Heart right ventricle (tissue), 16 donors: ENCODE measurements at regions of chr14 and their contacts with region 1.

Region 1: DNA sequence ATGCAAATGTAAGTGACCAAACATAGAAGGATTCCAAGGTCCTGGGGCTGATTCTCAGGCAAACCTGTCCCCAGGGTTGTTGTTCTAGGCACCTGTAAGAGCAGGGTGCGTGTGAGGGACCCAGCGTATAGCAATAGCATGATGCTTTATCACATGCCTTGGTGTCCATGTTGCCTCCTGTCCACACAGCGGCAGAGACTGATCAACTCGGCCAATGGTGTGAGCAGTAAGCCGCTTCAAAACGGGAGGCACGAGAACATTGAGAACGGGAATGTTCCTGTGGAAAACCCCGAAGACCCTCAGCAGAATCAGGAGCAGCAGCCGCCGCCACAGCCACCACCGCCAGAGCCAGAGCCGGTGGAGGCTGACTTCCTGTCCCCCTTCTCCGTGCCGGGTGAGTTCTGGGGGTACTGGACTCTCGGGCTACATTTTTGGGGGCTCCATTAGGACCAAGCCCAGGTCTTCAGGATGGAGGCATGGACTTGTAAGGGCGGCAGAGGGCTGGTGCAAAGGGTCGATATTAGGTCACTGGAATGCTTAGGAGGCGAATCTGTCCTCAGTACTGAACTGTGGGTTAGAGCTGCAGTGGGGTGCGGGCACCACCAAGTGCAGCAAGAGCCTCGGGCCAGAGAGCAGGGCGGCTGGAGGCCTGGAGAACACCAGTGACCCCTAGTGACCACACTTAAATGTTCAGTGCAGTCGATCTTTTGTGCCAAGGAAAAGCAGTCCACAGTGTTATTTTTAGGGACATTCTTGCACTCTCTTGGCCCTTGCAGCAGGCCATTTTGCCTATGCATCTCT is 57.2 kb upstream of the RIN3 start:
- DNase-seq: peak; percentile 59 to 70
- ATAC-seq: peak; percentile 40 to 78 (median 60)
- H3K4me3 ChIP-seq: no peak overlapping the region
- H3K27ac ChIP-seq: peak overlapping the region in 3 of 10 donors; percentile 4 to 25 (median 22)
- H3K4me1 ChIP-seq: peaks cover 10 to 51% (median 31%) of the 10 kb centered on the region in 9 donors
- H3K27me3 ChIP-seq: no peaks in the 10 kb centered on the region
- CTCF ChIP-seq: peak; percentile 67 to 85 (median 82)

Region 2: GRCh38 chr14:92121670-92122350 is 334.6 kb before region 1 on chr14 and contains the starts of genes CPSF2 and NDUFB1:
- intact Hi-C with region 1: loop called in 1 of 10 experiments (anchors 5 kb)
- DNase-seq: peak; percentile 87 to 92
- ATAC-seq: peak; percentile 91 to 97 (median 94)
- H3K4me3 ChIP-seq: peak within 1 kb of the TSS; percentile 64 to 98 (median 84)
- H3K27ac ChIP-seq: peak within 1 kb of the TSS; percentile 83 to 100 (median 96)
- H3K4me1 ChIP-seq: peaks cover 4 to 66% (median 42%) of the 10 kb centered on the region in 9 donors
- H3K27me3 ChIP-seq: no peaks in the 10 kb centered on the region
- CTCF ChIP-seq: peak in 1 of 9 donors; percentile 9
- total RNA-seq, gene CPSF2: 35.0 to 50.3 (median 43.2) TPM
- total RNA-seq, gene NDUFB1: 340 to 642 (median 481) TPM

Region 3: GRCh38 chr14:92144708-92145107 is 311.7 kb before region 1 on chr14:
- intact Hi-C with region 1: loop called in 7 of 10 experiments (anchors 5 to 10 kb)
- DNase-seq: no peak
- ATAC-seq: no peak
- H3K4me3 ChIP-seq: no peak overlapping the region
- H3K27ac ChIP-seq: no peak overlapping the region
- H3K4me1 ChIP-seq: no peaks in the 10 kb centered on the region
- H3K27me3 ChIP-seq: no peaks in the 10 kb centered on the region
- CTCF ChIP-seq: no peak

Region 4: DNA sequence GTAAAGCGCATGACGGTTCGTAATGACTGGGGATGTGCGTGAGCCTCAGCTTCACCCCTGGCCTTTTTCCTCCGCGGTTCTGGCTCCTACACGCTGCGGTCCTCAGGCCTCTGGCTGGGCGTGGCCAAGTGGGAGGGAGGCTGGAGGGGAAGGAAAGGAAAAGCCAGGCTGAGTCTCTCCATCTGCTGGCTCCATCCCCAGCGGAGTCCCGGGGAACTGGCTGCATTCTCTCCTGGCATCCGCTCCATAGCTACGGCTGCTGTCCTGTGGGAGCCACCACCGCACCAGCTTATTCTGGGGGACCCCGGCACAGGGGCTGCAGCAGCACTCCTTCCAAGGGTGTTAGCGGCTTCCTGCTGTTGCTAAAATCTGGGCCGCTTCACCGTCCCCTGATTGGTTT is 201.6 kb before region 1 on chr14:
- intact Hi-C with region 1: no loop called
- DNase-seq: peak; percentile 56
- ATAC-seq: peak; percentile 55 to 92 (median 84)
- H3K4me3 ChIP-seq: peak overlapping the region in 5 of 10 donors; percentile 2 to 26 (median 21)
- H3K27ac ChIP-seq: no peak overlapping the region
- H3K4me1 ChIP-seq: peaks cover 0 to 17% (median 0%) of the 10 kb centered on the region in 9 donors
- H3K27me3 ChIP-seq: peaks cover 0 to 62% (median 52%) of the 10 kb centered on the region in 7 donors
- CTCF ChIP-seq: no peak

Region 5: GRCh38 chr14:92540472-92541053 is 84.1 kb after region 1 on chr14:
- intact Hi-C with region 1: loop called in 4 of 10 experiments (anchors 2 to 10 kb)
- DNase-seq: peak; percentile 89 to 94
- ATAC-seq: peak; percentile 93 to 97 (median 96)
- H3K4me3 ChIP-seq: peak overlapping the region in 3 of 10 donors; percentile 1 to 14 (median 13)
- H3K27ac ChIP-seq: peak overlapping the region; percentile 82 to 94 (median 86)
- H3K4me1 ChIP-seq: peaks cover 9 to 51% (median 41%) of the 10 kb centered on the region in 9 donors
- H3K27me3 ChIP-seq: no peaks in the 10 kb centered on the region
- CTCF ChIP-seq: no peak

Region 6: GRCh38 chr14:92680781-92681650 is 224.6 kb after region 1 on chr14:
- intact Hi-C with region 1: loop called in 5 of 10 experiments (anchors 5 to 10 kb)
- DNase-seq: peak; percentile 64 to 77
- ATAC-seq: peak; percentile 40 to 72 (median 61)
- H3K4me3 ChIP-seq: no peak overlapping the region
- H3K27ac ChIP-seq: peak overlapping the region in 1 of 10 donors; percentile 2
- H3K4me1 ChIP-seq: peaks cover 0 to 28% (median 5%) of the 10 kb centered on the region in 9 donors
- H3K27me3 ChIP-seq: no peaks in the 10 kb centered on the region
- CTCF ChIP-seq: peak; percentile 85 to 94 (median 92)

Region 7: DNA sequence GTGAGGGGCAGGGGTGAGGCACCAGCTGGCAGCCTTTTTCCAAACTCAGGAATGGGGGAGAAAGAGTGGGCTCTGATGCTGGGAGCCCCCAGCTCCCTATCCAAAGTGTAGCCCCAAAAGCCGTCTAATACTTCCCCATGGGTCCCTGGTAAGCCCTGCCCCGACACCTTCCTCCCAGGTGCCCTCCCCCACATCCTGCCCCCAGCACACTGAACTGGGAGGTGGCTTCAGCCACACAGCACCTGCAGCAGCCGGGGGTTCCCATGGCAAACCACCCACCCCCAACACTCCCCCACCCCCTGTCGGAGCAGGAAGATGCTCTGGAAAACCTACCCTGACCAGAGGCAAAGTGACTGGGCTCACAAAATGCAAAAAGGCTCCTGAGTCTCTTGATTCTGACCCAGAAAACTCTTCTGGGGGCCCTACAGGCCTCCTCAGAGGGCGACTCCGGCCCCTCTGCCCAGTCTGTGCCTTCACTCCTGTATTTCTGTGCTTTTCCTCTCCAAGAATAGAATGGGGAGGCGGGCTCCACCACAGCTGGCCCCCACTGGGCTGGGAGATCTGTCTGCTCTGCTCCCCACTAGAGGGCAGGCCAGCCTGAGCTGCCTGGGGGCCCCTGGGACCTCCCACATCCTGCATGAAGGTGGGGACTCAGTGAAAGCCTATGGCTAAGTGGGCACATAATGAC is 577.7 kb after region 1 on chr14:
- intact Hi-C with region 1: no loop called
- DNase-seq: no peak
- ATAC-seq: peak in 6 of 8 donors; percentile 25 to 59 (median 42)
- H3K4me3 ChIP-seq: no peak overlapping the region
- H3K27ac ChIP-seq: peak overlapping the region in 4 of 10 donors; percentile 19 to 55 (median 43)
- H3K4me1 ChIP-seq: peaks cover 10 to 73% (median 65%) of the 10 kb centered on the region in 9 donors
- H3K27me3 ChIP-seq: no peaks in the 10 kb centered on the region
- CTCF ChIP-seq: peak in 8 of 9 donors; percentile 9 to 63 (median 53)